Calu3 (cell line): ENCODE measurements at regions of chr11 and their contacts with region 1.

Region 1: DNA sequence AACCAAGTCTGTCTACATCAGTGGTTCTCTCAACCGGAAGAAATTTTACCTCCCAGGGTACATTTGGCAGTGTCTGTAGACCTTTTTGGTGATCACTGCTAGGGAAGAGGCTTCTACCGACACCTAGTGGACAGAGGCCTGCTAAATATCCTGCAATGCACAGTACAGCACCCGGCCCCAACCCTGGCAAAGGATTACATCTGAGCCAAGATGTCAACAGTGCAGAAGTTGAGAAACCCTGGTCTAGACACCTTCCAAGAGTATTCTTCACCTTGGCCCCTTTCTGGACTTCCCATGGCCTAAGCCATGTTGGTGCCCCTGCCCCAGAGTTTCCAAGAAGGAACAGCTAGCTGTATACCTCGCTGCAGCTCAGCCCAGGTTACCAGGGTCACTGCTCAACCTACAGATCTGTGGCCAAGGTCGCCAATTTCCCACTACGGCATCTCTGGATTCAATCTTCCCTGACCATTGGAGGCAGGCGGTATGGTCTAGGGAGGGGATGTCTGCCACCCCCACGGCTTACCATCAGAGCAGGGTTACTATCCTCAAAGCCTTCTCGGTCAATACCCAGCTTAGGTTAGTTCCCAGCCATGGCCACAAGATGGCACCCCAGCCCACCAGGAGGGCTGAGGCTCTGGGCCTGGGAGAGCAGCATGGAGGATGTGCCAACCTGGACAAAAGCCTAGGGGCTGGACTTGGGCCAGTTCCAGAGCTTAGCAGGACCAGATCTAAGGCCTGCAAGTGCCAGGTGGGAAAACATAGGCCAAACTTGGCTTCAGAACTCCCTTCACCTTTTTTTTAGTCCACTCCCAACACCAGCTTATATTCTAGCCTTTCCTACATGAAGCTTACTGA is 3.7 kb upstream of the KCNC1 start:
- DNase-seq: peak; percentile 92
- H3K4me3 Mint-ChIP-seq: no peak overlapping the region
- H3K27ac Mint-ChIP-seq: no peak overlapping the region
- H3K4me1 Mint-ChIP-seq: no peaks in the 10 kb centered on the region
- H3K27me3 Mint-ChIP-seq: peaks cover 64% of the 10 kb centered on the region
- CTCF ChIP-seq: peak; percentile 83

Region 2: DNA sequence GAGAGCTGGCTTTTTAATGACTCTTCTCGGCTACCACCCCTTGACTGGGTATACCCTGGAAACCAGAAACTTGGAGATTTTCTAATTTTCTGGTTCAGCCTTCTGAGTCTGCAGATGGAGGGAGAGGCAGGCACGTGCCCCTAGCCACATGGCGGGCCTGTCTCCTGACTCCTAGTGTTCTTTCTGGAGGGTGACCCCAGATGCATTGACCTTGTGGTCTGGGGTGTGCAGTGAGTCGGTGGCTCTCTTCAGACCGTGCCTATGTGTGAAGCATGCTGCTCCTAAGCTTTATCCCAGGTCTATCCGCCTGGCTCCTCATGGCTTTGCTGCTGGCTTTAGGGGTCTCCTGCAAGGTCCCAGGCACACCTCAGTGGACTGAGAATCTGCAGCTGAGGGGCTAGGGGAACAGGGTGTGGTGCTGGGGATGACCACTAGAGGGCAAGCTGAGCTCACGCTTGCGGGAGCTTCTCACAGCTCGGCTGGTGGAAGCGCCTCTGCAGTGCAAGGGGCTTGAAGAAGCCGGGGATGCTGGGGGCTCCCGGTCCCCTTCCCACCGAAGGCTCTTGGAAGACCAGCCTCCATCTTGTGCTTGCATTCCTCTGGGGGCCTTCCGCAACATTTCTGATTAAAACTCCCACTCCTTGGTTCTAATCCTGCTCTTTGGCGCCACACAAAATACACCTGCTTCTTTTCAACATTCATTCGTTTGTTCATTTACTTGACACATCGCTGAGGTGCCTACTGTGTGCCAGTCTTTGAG is 132.0 kb before region 1 on chr11:
- CTCF ChIA-PET with region 1: interaction called, 70 read pairs
- intact Hi-C with region 1: loop called (anchors 1 kb)
- DNase-seq: peak; percentile 84
- H3K4me3 Mint-ChIP-seq: no peak overlapping the region
- H3K27ac Mint-ChIP-seq: no peak overlapping the region
- H3K4me1 Mint-ChIP-seq: peaks cover 8% of the 10 kb centered on the region
- H3K27me3 Mint-ChIP-seq: peaks cover 47% of the 10 kb centered on the region
- CTCF ChIP-seq: peak; percentile 97

Region 3: DNA sequence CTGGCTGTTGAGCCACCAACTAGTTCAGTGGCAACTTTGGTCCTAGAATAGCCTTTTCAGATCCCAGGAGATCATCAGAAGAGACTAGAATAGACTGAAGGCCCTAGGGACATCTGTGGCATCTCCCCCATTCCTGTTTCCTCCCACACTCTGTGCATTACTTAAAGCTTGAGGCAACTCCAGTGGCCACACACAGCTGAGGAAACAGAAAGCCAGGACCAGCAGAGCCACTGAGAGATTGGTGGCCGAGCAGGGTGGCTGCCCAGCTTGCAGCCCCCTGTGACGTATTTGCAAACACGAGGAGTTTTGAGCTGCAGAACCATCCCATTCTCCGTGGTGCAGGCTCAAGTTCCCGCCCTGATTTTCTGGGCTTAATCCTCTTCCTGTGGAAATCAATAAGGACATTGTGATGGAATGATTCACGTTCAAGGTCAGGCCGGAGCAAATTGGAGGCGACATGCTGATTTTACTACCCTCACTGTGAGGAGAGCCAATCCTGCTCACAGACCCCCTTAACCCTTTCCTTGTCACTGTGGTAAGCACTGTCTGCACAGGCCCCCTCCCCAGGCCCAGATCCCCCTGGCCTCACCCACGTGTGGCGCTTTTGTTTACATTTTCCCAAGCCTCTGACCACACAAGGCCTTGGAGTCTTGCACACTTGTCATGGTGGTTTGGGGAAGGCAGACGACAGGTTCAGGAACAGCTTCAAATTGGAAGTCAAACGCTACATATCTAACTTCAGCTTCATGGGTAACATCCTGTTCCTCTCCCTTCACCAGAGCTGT is 80.5 kb before region 1 on chr11:
- CTCF ChIA-PET with region 1: no interaction called
- intact Hi-C with region 1: no loop called
- DNase-seq: peak; percentile 33
- H3K4me3 Mint-ChIP-seq: no peak overlapping the region
- H3K27ac Mint-ChIP-seq: no peak overlapping the region
- H3K4me1 Mint-ChIP-seq: peaks cover 25% of the 10 kb centered on the region
- H3K27me3 Mint-ChIP-seq: no peaks in the 10 kb centered on the region
- CTCF ChIP-seq: no peak

Region 4: GRCh38 chr11:17695454-17696441 is 35.1 kb before region 1 on chr11:
- CTCF ChIA-PET with region 1: no interaction called
- intact Hi-C with region 1: no loop called
- DNase-seq: no peak
- H3K4me3 Mint-ChIP-seq: peak overlapping the region; percentile 24
- H3K27ac Mint-ChIP-seq: no peak overlapping the region
- H3K4me1 Mint-ChIP-seq: no peaks in the 10 kb centered on the region
- H3K27me3 Mint-ChIP-seq: peaks cover 71% of the 10 kb centered on the region
- CTCF ChIP-seq: no peak

Region 5: GRCh38 chr11:17846852-17847453 is 116.1 kb after region 1 on chr11:
- CTCF ChIA-PET with region 1: interaction called, 14 read pairs
- intact Hi-C with region 1: loop called (anchors 2 kb)
- DNase-seq: peak; percentile 30
- H3K4me3 Mint-ChIP-seq: no peak overlapping the region
- H3K27ac Mint-ChIP-seq: no peak overlapping the region
- H3K4me1 Mint-ChIP-seq: peaks cover 31% of the 10 kb centered on the region
- H3K27me3 Mint-ChIP-seq: no peaks in the 10 kb centered on the region
- CTCF ChIP-seq: no peak

Region 6: GRCh38 chr11:17906436-17906835 is 175.6 kb after region 1 on chr11:
- CTCF ChIA-PET with region 1: interaction called, 11 read pairs
- intact Hi-C with region 1: no loop called
- DNase-seq: peak; percentile 45
- H3K4me3 Mint-ChIP-seq: no peak overlapping the region
- H3K27ac Mint-ChIP-seq: no peak overlapping the region
- H3K4me1 Mint-ChIP-seq: no peaks in the 10 kb centered on the region
- H3K27me3 Mint-ChIP-seq: no peaks in the 10 kb centered on the region
- CTCF ChIP-seq: peak; percentile 32

Region 7: DNA sequence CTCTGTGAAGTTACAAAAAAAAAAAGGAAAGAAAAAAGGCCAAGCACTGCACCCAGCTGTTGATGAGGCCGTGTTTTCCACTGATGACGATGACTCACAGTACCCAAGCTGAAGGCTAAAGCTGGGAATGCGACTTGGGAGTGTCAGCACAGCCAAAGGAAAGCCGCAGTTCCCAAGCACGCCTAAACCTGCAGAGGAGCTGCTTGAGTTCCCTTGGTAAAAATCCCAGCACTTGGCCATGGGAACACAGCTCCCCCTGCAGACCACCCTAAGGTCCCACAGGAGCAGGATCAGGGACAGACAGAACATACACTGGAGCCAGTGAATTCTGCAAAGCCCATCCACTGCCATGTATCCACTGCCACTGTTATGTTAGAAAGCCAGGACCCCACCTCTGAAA is 242.2 kb after region 1 on chr11:
- CTCF ChIA-PET with region 1: interaction called, 60 read pairs
- intact Hi-C with region 1: loop called (anchors 1 kb)
- DNase-seq: peak; percentile 32
- H3K4me3 Mint-ChIP-seq: no peak overlapping the region
- H3K27ac Mint-ChIP-seq: no peak overlapping the region
- H3K4me1 Mint-ChIP-seq: no peaks in the 10 kb centered on the region
- H3K27me3 Mint-ChIP-seq: no peaks in the 10 kb centered on the region
- CTCF ChIP-seq: no peak

Region 8: DNA sequence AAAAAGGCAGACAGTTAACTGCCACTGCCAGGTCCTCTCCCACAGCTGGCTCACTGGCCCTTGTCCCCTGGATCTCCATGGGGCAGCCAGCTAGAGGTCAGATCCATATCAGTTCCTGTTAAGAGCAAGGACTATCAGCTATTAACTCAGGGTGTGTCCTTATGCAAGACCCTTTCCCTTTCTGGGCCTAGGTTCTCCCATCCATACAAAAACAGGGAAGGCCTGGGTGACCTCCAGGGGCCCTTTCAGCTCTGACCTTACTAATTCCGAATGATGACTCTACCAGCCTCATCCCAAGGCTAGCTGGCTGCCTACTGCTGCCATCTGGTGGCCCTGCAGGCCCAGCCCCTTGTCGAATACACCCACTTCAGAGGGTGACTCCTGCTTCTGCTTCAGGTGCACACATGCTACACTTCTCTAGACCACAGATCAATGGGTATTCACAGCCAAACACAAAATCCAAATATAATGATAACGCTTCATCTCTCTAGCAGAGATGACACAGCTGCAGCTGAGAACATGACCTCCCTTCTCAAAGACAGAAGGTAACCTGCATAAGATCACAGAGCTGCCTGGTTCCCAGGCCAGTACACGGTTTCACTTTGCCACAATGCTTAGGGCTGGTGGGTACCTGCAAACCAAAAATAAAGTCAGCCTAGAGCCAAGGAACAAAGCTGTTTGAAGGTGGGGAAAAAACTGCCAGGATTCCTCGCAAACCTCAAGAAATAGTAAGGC is 247.9 kb after region 1 on chr11:
- CTCF ChIA-PET with region 1: interaction called, 60 read pairs
- intact Hi-C with region 1: loop called (anchors 1 kb)
- DNase-seq: peak; percentile 69
- H3K4me3 Mint-ChIP-seq: no peak overlapping the region
- H3K27ac Mint-ChIP-seq: no peak overlapping the region
- H3K4me1 Mint-ChIP-seq: peaks cover 2% of the 10 kb centered on the region
- H3K27me3 Mint-ChIP-seq: no peaks in the 10 kb centered on the region
- CTCF ChIP-seq: peak; percentile 59